Ovary (tissue), 10 donors: ENCODE measurements at regions of chr3 and their contacts with region 1.

Region 1: GRCh38 chr3:190883973-190884832 is 21.7 kb upstream of the GMNC start:
- DNase-seq: peak; percentile 17 to 48 (median 35)
- H3K4me3 ChIP-seq: no peak overlapping the region
- H3K27ac ChIP-seq: no peak overlapping the region
- H3K4me1 ChIP-seq: no peaks in the 10 kb centered on the region
- H3K27me3 ChIP-seq: no peaks in the 10 kb centered on the region
- CTCF ChIP-seq: peak in 2 of 3 donors; percentile 40 to 44
- EP300 ChIP-seq: no peak
- POLR2A ChIP-seq: no peak

Region 2: DNA sequence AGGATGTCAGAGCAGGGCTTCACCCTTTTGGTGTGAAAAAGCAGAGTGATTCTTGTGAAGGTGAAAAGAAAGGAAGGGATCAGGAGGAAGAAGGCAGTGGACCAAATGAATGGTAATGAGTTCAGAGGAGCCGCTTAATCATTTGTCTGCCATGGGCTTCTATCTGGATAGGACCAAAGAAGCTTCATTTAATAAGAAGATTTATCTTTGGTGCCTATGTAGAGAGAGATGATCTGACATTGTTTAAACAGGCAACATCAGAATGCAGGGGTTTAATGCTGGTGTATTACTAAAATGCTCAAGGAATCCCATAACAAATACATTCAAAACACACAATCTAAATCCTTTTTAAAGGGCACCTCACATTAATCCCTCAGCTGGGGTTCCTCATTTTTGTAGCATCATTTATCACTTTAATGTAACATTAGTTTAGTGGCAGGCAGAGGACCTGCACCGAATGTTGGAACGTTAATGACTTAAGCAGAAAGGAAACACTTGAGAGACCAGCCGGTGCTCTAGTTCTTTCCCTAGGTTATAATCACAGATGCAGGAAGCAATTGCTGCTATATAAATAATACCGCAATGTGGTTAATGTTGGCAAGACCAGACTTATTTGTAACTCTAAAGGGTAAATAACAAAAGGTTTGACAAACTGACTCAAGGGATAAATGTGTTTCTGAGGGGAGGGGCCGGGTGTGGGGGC is 398.2 kb before region 1 on chr3:
- intact Hi-C with region 1: no loop called
- DNase-seq: no peak
- H3K4me3 ChIP-seq: no peak overlapping the region
- H3K27ac ChIP-seq: no peak overlapping the region
- H3K4me1 ChIP-seq: no peaks in the 10 kb centered on the region
- H3K27me3 ChIP-seq: no peaks in the 10 kb centered on the region
- CTCF ChIP-seq: no peak
- EP300 ChIP-seq: no peak
- POLR2A ChIP-seq: no peak

Region 3: DNA sequence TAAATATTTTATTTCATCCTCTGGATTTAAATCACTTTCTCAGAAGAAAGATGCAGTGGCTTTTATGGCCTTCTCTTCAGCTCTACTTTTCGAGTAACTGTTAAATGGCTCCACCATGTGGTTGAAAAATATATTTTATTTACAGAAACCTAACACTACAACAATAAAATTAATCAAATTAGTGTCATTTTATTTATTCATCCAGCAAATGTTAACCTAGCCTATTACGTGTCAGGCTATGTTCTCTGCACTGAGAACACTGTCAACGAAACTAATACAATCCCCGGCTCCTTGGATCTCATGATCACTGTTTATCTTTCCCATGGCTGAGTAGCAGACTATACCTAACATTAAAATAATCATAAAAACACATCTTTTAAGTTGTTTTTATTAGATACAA is 166.8 kb after region 1 on chr3:
- intact Hi-C with region 1: loop called in 1 of 4 experiments (anchors 10 kb)
- DNase-seq: no peak
- H3K4me3 ChIP-seq: no peak overlapping the region
- H3K27ac ChIP-seq: no peak overlapping the region
- H3K4me1 ChIP-seq: no peaks in the 10 kb centered on the region
- H3K27me3 ChIP-seq: no peaks in the 10 kb centered on the region
- CTCF ChIP-seq: peak; percentile 22 to 30 (median 27)
- EP300 ChIP-seq: no peak
- POLR2A ChIP-seq: no peak